ENCODE measurements at regions of chr1 and their contacts with region 1.

Region 1: DNA sequence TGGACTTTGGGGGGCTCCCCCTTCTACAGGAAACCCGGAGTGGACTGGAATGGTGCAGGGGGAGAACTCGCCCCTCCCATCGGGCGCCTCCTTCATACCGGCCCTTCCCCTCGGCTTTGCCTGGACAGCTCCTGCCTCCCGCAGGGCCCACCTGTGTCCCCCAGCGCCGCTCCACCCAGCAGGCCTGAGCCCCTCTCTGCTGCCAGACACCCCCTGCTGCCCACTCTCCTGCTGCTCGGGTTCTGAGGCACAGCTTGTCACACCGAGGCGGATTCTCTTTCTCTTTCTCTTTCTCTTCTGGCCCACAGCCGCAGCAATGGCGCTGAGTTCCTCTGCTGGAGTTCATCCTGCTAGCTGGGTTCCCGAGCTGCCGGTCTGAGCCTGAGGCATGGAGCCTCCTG is at the start of gene TNFRSF14:
- DNase-seq: peak; percentile 79
- ATAC-seq: peak; percentile 68
- H3K4me3 Mint-ChIP-seq: peak within 1 kb of the TSS; percentile 98
- H3K27ac Mint-ChIP-seq: peak within 1 kb of the TSS; percentile 99
- H3K4me1 Mint-ChIP-seq: peaks cover 21% of the 10 kb centered on the region
- H3K27me3 Mint-ChIP-seq: no peaks in the 10 kb centered on the region
- total RNA-seq, gene TNFRSF14: 131 to 134 TPM

Region 2: GRCh38 chr1:2412519-2413233 is 143.6 kb before region 1 on chr1 and contains the start of gene PEX10:
- POLR2A ChIA-PET with region 1: interaction called, 25 read pairs
- DNase-seq: peak; percentile 100
- ATAC-seq: peak; percentile 75
- H3K4me3 Mint-ChIP-seq: peak within 1 kb of the TSS; percentile 92
- H3K27ac Mint-ChIP-seq: peak within 1 kb of the TSS; percentile 90
- H3K4me1 Mint-ChIP-seq: peaks cover 29% of the 10 kb centered on the region
- H3K27me3 Mint-ChIP-seq: no peaks in the 10 kb centered on the region
- total RNA-seq, gene PEX10: 9.6 to 9.9 TPM

Region 3: GRCh38 chr1:2499986-2500596 is 56.2 kb before region 1 on chr1:
- POLR2A ChIA-PET with region 1: no interaction called
- DNase-seq: no peak
- ATAC-seq: peak; percentile 28
- H3K4me3 Mint-ChIP-seq: peak overlapping the region; percentile 37
- H3K27ac Mint-ChIP-seq: peak overlapping the region; percentile 76
- H3K4me1 Mint-ChIP-seq: peaks cover 12% of the 10 kb centered on the region
- H3K27me3 Mint-ChIP-seq: no peaks in the 10 kb centered on the region

Region 4: GRCh38 chr1:2525920-2526823 is 30.1 kb before region 1 on chr1 and contains the start of gene PANK4:
- POLR2A ChIA-PET with region 1: interaction called, 32 read pairs
- DNase-seq: peak; percentile 92
- ATAC-seq: peak; percentile 85
- H3K4me3 Mint-ChIP-seq: peak within 1 kb of the TSS; percentile 86
- H3K27ac Mint-ChIP-seq: peak within 1 kb of the TSS; percentile 96
- H3K4me1 Mint-ChIP-seq: peaks cover 35% of the 10 kb centered on the region
- H3K27me3 Mint-ChIP-seq: peaks cover 16% of the 10 kb centered on the region
- total RNA-seq, gene PANK4: 86.5 to 88.9 TPM

Region 5: GRCh38 chr1:2545759-2546514 is 10.3 kb before region 1 on chr1:
- POLR2A ChIA-PET with region 1: interaction called, 71 read pairs
- DNase-seq: peak; percentile 91
- ATAC-seq: peak; percentile 37
- H3K4me3 Mint-ChIP-seq: peak overlapping the region; percentile 91
- H3K27ac Mint-ChIP-seq: peak overlapping the region; percentile 96
- H3K4me1 Mint-ChIP-seq: peaks cover 9% of the 10 kb centered on the region
- H3K27me3 Mint-ChIP-seq: peaks cover 5% of the 10 kb centered on the region

Region 6: DNA sequence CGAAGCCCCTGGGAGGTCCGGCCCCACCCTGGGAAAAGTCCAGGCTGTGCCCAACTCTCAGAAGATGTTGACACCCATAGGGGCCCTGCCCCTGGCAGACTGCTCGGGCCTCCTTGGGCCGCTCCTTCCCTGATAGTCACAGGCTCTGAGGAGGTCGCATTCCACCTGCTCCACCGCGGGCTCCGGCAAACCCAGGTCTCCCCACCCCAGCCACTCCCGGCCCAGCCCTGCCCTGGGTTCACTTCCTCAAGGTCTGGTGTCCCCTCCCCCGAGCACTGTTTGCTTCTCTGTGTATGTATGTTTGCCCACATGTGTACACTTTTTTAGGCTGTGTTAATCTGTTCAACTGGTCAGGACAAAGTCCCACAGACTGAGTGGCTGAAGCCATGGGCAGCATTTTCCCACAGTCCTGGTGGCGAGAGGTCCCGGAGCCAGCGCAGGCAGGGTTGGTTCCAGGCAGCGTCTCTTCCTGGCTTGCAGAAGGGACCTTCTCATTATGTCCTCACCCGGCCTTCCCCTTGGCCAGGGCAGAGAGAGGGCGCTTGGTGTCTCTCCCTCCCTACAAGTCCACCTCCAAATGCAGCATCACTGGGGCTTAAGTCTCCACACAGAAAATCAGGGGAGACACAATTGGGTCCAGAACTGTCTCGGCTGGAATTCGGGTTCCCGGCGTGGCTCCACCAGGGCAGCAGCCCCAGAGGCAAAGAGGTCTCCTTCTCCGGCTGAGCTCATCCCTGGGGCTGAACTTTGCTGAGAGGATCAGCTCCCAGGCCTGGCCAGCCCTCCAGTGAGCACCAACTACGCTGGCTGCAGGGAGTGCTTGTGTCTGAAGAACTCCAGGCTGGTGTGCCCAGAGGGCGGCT is 19.8 kb after region 1 on chr1:
- POLR2A ChIA-PET with region 1: interaction called, 68 read pairs
- DNase-seq: no peak
- ATAC-seq: no peak
- H3K4me3 Mint-ChIP-seq: no peak overlapping the region
- H3K27ac Mint-ChIP-seq: peak overlapping the region; percentile 67
- H3K4me1 Mint-ChIP-seq: peaks cover 28% of the 10 kb centered on the region
- H3K27me3 Mint-ChIP-seq: no peaks in the 10 kb centered on the region

Region 7: DNA sequence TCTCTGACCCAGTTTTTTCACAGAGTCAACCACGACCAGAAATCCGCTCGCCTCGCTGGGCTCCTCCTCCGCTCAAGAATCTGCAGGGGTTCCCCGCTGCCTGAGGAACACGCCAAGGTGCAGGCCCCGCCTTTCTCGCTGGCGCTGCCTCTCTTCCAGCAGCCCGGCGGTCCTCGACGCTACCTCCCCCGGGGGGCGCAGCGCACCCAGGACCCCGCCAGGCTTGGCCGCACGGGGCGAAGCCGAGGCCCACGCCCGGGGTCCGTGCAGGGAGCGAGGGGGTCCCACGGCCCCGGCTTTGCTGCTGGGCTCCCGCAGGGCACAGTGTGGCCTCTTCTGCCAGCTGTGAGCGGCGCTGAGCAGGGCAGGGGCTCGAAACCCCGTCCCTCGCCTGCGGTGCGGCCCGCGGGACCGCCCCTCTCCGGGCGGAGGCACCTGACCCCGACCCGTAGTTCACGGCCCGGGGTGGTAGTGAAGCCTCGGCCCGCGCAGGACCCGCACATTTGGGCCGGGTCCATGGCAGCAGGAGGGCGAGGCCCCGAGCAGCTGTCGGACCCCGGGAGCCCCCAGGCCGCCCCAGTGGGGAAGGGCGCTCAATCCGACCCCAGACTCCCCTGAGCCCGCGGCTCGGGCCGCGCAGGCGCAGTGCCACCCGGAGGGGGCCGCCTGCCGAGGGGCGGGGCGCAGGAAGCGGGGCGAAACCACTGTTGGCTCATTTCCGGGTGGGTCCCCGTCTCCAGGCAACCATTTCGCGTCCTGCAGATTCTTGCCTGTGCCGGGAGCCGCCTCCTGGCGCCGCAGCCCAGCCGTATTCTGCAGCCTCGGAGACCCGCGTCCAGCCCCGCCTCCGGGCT is 86.5 kb after region 1 on chr1:
- POLR2A ChIA-PET with region 1: interaction called, 13 read pairs
- DNase-seq: peak; percentile 97
- ATAC-seq: peak; percentile 85
- H3K4me3 Mint-ChIP-seq: peak overlapping the region; percentile 95
- H3K27ac Mint-ChIP-seq: peak overlapping the region; percentile 90
- H3K4me1 Mint-ChIP-seq: peaks cover 7% of the 10 kb centered on the region
- H3K27me3 Mint-ChIP-seq: peaks cover 3% of the 10 kb centered on the region

Measured in activated naive CD8-positive, alpha-beta T cell treated with anti-CD3 and anti-CD28 coated beads, Interleukin-2, amount 10 ng/mL, durations not matched to agents 7 days and 5 days (primary cell).